Natural killer cell (primary cell): ENCODE measurements at regions of chr13 and their contacts with region 1.

Region 1: GRCh38 chr13:81048026-81048461 is 707.1 kb upstream of the SPRY2 start:
- DNase-seq: no peak
- ATAC-seq: no peak
- H3K4me3 ChIP-seq: no peak overlapping the region
- H3K4me3 Mint-ChIP-seq: no peak overlapping the region
- H3K27ac ChIP-seq: no peak overlapping the region
- H3K27ac Mint-ChIP-seq: no peak overlapping the region
- H3K4me1 ChIP-seq: no peaks in the 10 kb centered on the region
- H3K4me1 Mint-ChIP-seq: no peaks in the 10 kb centered on the region
- H3K27me3 ChIP-seq: no peaks in the 10 kb centered on the region
- H3K27me3 Mint-ChIP-seq: no peaks in the 10 kb centered on the region
- CTCF ChIP-seq: no peak

Region 2: DNA sequence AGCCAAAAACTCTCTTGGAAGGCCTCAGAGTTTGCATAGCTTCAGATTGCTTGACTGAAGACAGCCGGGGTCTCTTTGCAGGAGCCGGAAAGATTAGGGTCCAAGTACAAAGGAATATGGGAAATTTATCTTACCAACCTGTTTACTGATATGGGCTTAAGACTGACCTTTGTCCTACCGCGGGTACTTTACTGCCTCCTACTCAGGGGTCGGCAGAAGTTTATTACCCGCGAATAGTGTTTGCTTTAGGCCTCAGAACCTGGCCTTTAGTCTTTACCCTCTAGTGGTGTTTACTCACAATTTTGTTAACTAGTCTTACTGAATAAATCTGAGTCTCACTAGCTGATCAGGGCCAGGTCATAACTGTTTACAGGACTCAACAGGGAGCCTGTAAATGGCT is 58.3 kb after region 1 on chr13:
- intact Hi-C with region 1: loop called (anchors 10 kb)
- DNase-seq: no peak
- ATAC-seq: no peak
- H3K4me3 ChIP-seq: no peak overlapping the region
- H3K4me3 Mint-ChIP-seq: no peak overlapping the region
- H3K27ac ChIP-seq: no peak overlapping the region
- H3K27ac Mint-ChIP-seq: no peak overlapping the region
- H3K4me1 ChIP-seq: no peaks in the 10 kb centered on the region
- H3K4me1 Mint-ChIP-seq: no peaks in the 10 kb centered on the region
- H3K27me3 ChIP-seq: no peaks in the 10 kb centered on the region
- H3K27me3 Mint-ChIP-seq: no peaks in the 10 kb centered on the region
- CTCF ChIP-seq: no peak